Thyroid gland (tissue), 4 donors: ENCODE measurements at regions of chr5 and their contacts with region 1.

Region 1: DNA sequence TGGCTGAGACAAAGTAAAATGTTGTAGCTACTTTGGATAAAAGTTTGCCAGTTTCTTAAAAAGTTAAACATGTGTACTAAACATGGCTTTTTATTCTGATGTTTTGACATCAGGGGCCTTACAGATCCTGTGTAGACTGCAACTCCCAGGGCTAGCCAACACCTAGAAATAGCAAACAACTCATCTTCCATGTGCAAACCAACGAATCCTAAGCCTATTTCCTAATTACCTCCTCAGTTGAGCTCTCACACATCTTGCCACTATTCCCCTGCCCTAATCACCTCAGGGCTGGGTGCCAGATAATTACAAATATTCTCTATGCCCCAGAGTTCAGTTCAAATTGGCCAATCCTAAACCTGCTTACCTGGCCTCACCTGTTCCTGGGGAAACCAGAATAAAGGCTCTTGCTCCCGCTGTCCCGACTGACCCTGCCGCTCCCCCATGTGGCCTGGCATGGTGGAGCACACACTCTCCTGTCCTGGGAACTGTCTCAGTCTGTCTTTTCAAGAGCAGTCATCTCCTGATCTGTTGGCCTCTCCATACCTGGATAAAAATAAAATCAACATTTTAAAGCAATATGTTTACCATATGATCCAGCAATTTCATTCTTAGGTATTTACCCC is 37.1 kb upstream of the FAM169A start:
- DNase-seq: peak; percentile 75 to 80
- H3K4me3 ChIP-seq: no peak overlapping the region
- H3K27ac ChIP-seq: no peak overlapping the region
- H3K4me1 ChIP-seq: no peaks in the 10 kb centered on the region
- H3K27me3 ChIP-seq: no peaks in the 10 kb centered on the region
- CTCF ChIP-seq: peak in 5 of 6 experiments; percentile 21 to 73 (median 65)
- POLR2A ChIP-seq: no peak

Region 2: GRCh38 chr5:74684900-74685851 is 218.1 kb before region 1 on chr5 and contains the start of gene HEXB:
- intact Hi-C with region 1: loop called (anchors 10 kb)
- DNase-seq: peak; percentile 92 to 93
- H3K4me3 ChIP-seq: peak within 1 kb of the TSS; percentile 37 to 80 (median 75)
- H3K27ac ChIP-seq: peak within 1 kb of the TSS; percentile 80 to 95 (median 93)
- H3K4me1 ChIP-seq: peaks cover 0 to 14% of the 10 kb centered on the region in 2 donors
- H3K27me3 ChIP-seq: no peaks in the 10 kb centered on the region
- CTCF ChIP-seq: peak in 2 of 6 experiments; percentile 8 to 16
- POLR2A ChIP-seq: peak in 1 of 2 donors; percentile 94
- total RNA-seq, gene HEXB: 141 to 264 (median 166) TPM

Region 3: GRCh38 chr5:75108931-75109596 is 205.8 kb after region 1 on chr5:
- intact Hi-C with region 1: no loop called
- DNase-seq: no peak
- H3K4me3 ChIP-seq: no peak overlapping the region
- H3K27ac ChIP-seq: no peak overlapping the region
- H3K4me1 ChIP-seq: no peaks in the 10 kb centered on the region
- H3K27me3 ChIP-seq: no peaks in the 10 kb centered on the region
- CTCF ChIP-seq: no peak
- POLR2A ChIP-seq: no peak